ENCODE measurements at regions of chr10 and their contacts with region 1.

Region 1: GRCh38 chr10:86399879-86400704 is 33.5 kb upstream of the GRID1 start:
- DNase-seq: peak; percentile 97
- ATAC-seq: peak; percentile 95
- H3K4me3 Mint-ChIP-seq: peak overlapping the region; percentile 79
- H3K27ac Mint-ChIP-seq: peak overlapping the region; percentile 85
- H3K4me1 Mint-ChIP-seq: peaks cover 8% of the 10 kb centered on the region
- H3K27me3 Mint-ChIP-seq: peaks cover 14% of the 10 kb centered on the region

Region 2: DNA sequence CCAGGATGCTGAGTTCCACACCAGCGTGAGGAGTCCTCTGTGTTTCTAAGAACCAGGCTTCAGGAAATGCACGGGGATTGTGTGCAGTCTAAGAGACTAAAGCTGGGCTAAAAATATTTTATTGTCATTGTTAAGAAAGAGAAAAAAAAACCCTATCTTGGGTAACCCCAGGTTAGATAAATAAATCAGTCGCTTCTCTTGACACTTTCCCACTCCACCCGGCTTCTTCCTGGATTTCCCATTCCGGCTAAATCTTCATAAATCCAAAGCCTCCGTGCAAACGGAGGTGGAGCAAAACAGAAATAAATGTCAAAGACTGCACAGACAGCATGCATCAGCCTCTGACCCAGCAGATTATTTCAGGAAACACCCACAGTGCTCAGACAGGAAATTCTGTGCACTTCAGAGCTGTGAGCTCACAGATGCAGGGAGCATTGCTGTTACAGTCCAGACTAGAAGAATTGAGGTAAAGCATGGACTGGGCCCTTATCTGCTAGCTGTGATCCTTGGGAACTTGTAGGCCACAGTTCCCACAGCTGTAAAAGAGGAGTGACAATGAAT is 11.3 kb after region 1 on chr10:
- CTCF ChIA-PET with region 1: interaction called, 87 read pairs
- DNase-seq: peak; percentile 69
- ATAC-seq: peak; percentile 81
- H3K4me3 Mint-ChIP-seq: peak overlapping the region; percentile 43
- H3K27ac Mint-ChIP-seq: peak overlapping the region; percentile 91
- H3K4me1 Mint-ChIP-seq: peaks cover 36% of the 10 kb centered on the region
- H3K27me3 Mint-ChIP-seq: peaks cover 8% of the 10 kb centered on the region

Region 3: GRCh38 chr10:86472061-86472460 is 72.0 kb after region 1 on chr10:
- CTCF ChIA-PET with region 1: interaction called, 10 read pairs
- DNase-seq: no peak
- ATAC-seq: no peak
- H3K4me3 Mint-ChIP-seq: no peak overlapping the region
- H3K27ac Mint-ChIP-seq: no peak overlapping the region
- H3K4me1 Mint-ChIP-seq: no peaks in the 10 kb centered on the region
- H3K27me3 Mint-ChIP-seq: no peaks in the 10 kb centered on the region

Region 4: GRCh38 chr10:86497621-86498020 is 97.5 kb after region 1 on chr10:
- CTCF ChIA-PET with region 1: no interaction called
- DNase-seq: no peak
- ATAC-seq: no peak
- H3K4me3 Mint-ChIP-seq: no peak overlapping the region
- H3K27ac Mint-ChIP-seq: no peak overlapping the region
- H3K4me1 Mint-ChIP-seq: peaks cover 12% of the 10 kb centered on the region
- H3K27me3 Mint-ChIP-seq: no peaks in the 10 kb centered on the region

Region 5: DNA sequence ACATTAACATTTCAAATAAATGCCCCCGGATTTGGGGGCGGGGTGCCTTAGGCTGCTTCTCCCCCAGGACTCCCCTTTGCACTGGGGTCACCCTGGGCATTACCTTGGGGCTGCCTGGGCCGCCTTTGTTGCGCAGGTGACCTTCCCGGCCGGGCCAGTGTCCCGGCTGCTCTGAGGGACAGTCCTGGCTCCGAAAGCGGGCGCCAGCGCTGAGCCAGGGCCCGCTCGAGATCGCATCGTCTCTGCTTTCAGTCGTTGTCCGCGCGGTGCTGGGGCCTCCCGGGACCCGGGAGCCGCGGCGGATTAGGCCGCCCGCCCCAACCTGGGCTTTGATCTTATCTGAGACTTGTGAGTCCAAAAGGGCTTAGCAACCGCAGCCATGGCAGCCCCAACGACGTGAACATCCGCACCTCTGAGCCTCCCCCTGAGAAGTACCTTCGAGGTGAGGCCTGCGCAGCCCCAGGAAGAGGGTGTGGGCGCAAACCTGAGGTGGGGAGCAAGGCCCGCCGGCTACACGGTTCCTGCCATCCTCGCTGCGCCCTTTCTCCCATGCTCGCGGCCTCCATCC is 136.3 kb after region 1 on chr10:
- CTCF ChIA-PET with region 1: interaction called, 11 read pairs
- DNase-seq: peak; percentile 68
- ATAC-seq: peak; percentile 75
- H3K4me3 Mint-ChIP-seq: peak overlapping the region; percentile 52
- H3K27ac Mint-ChIP-seq: peak overlapping the region; percentile 22
- H3K4me1 Mint-ChIP-seq: peaks cover 13% of the 10 kb centered on the region
- H3K27me3 Mint-ChIP-seq: no peaks in the 10 kb centered on the region

Measured in activated CD8-positive, alpha-beta memory T cell treated with anti-CD3 and anti-CD28 coated beads, Interleukin-2, amount 10 ng/mL, durations not matched to agents 7 days and 5 days (primary cell).